MCF 10A (cell line): ENCODE measurements at regions of chr2 and their contacts with region 1.

Region 1: DNA sequence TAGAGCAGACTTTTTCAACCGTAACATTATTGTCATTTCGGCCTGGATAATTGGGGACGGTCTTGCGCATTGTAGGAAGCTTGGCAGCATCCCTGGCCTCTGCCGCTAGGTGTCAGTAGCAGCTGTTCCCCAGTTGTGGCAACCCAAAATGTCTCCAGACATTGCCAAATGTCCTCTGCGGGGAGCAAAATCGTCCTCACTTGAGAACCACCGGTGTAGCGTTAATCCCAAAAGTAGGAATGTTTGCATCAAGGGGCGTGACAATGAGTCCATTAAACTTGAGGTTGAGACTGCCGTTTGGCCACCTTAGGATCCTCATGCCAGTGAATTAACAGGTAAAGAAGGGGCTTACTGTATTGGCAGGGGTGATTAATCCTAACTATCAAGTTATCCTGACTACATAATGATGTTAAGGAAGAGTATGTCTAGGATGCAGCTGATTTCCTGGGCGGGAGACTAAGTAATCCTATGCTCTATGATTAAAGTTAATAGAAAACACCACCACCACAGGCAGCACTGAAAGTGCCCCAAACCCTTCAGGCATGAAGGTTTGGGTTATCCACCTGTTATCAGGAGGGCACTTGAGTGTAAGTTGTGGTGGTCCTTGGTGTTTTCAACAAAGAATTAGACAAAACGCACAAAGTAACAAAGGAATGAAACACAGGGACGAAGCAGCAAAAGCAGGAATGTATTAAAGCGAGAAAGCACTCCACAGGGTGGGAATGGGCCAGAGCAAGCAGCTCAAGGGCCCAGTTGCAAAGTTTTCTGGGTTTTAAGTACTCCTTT is 4.9 kb upstream of the ZC3H8 start:
- DNase-seq: peak; percentile 83
- H3K4me3 Mint-ChIP-seq: peak overlapping the region; percentile 39
- H3K27ac Mint-ChIP-seq: no peak overlapping the region
- H3K4me1 Mint-ChIP-seq: peaks cover 6% of the 10 kb centered on the region
- H3K27me3 Mint-ChIP-seq: no peaks in the 10 kb centered on the region
- CTCF ChIP-seq: peak; percentile 95

Region 2: DNA sequence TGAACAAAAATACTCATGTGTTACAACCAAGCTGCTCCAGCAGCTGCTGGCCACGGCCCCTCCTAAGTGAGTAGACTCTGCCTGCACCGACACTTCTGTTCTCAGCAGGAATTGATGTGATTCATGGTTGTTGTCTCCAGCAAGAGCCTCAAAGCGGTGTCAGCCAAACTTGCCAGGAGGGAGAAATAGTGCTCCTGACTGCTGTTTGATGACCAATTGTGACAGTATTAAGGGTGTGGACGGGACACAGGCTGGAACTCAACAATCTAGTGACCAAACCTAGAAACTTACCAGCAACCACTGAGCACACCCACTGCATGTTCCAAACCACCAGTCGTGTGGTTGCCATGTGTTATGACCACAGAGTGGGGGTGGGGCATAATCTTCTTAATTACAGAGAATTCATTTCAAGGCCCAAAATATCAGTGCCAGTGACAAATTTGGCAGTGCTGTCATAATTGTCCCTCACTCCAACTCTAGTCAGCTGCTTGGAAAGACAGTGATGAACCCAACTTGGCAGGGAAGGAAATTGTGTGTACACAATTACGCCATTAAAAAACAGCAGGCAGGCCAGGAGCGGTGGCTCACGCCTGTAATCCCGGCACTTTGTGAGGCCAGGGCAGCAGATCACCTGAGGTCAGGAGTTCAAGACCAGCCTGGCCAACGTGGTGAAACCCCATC is 91.1 kb before region 1 on chr2:
- CTCF ChIA-PET with region 1: no interaction called
- POLR2A ChIA-PET with region 1: no interaction called
- intact Hi-C with region 1: no loop called
- DNase-seq: peak; percentile 2
- H3K4me3 Mint-ChIP-seq: no peak overlapping the region
- H3K27ac Mint-ChIP-seq: no peak overlapping the region
- H3K4me1 Mint-ChIP-seq: no peaks in the 10 kb centered on the region
- H3K27me3 Mint-ChIP-seq: no peaks in the 10 kb centered on the region
- CTCF ChIP-seq: no peak

Region 3: GRCh38 chr2:112244854-112245253 is 14.8 kb before region 1 on chr2:
- CTCF ChIA-PET with region 1: interaction called, 15 read pairs
- POLR2A ChIA-PET with region 1: interaction called, 5 read pairs
- intact Hi-C with region 1: no loop called
- DNase-seq: no peak
- H3K4me3 Mint-ChIP-seq: no peak overlapping the region
- H3K27ac Mint-ChIP-seq: no peak overlapping the region
- H3K4me1 Mint-ChIP-seq: no peaks in the 10 kb centered on the region
- H3K27me3 Mint-ChIP-seq: no peaks in the 10 kb centered on the region
- CTCF ChIP-seq: no peak

Region 4: GRCh38 chr2:112275306-112275886 is 15.7 kb after region 1 on chr2 and contains the start of gene ZC3H6:
- CTCF ChIA-PET with region 1: interaction called, 7 read pairs
- POLR2A ChIA-PET with region 1: interaction called, 28 read pairs
- intact Hi-C with region 1: no loop called
- DNase-seq: peak; percentile 94
- H3K4me3 Mint-ChIP-seq: peak within 1 kb of the TSS; percentile 84
- H3K27ac Mint-ChIP-seq: peak within 1 kb of the TSS; percentile 96
- H3K4me1 Mint-ChIP-seq: no peaks in the 10 kb centered on the region
- H3K27me3 Mint-ChIP-seq: no peaks in the 10 kb centered on the region
- CTCF ChIP-seq: peak; percentile 6
- total RNA-seq, gene ZC3H6: 16.9 and 18.6 TPM in 2 replicates

Region 5: GRCh38 chr2:112301171-112301584 is 41.5 kb after region 1 on chr2:
- CTCF ChIA-PET with region 1: no interaction called
- POLR2A ChIA-PET with region 1: no interaction called
- intact Hi-C with region 1: no loop called
- DNase-seq: no peak
- H3K4me3 Mint-ChIP-seq: no peak overlapping the region
- H3K27ac Mint-ChIP-seq: no peak overlapping the region
- H3K4me1 Mint-ChIP-seq: no peaks in the 10 kb centered on the region
- H3K27me3 Mint-ChIP-seq: no peaks in the 10 kb centered on the region
- CTCF ChIP-seq: no peak

Region 6: GRCh38 chr2:112542123-112542983 is 282.7 kb after region 1 on chr2 and contains the start of gene POLR1B:
- CTCF ChIA-PET with region 1: no interaction called
- POLR2A ChIA-PET with region 1: interaction called, 4 read pairs
- intact Hi-C with region 1: loop called (anchors 2 kb)
- DNase-seq: peak; percentile 90
- H3K4me3 Mint-ChIP-seq: no peak within 1 kb of the TSS
- H3K27ac Mint-ChIP-seq: no peak within 1 kb of the TSS
- H3K4me1 Mint-ChIP-seq: peaks cover 11% of the 10 kb centered on the region
- H3K27me3 Mint-ChIP-seq: no peaks in the 10 kb centered on the region
- CTCF ChIP-seq: no peak
- total RNA-seq, gene POLR1B: 51.6 and 74.0 TPM in 2 replicates

Region 7: GRCh38 chr2:112685271-112685884 is 425.7 kb after region 1 on chr2:
- CTCF ChIA-PET with region 1: no interaction called
- POLR2A ChIA-PET with region 1: no interaction called
- intact Hi-C with region 1: no loop called
- DNase-seq: no peak
- H3K4me3 Mint-ChIP-seq: no peak overlapping the region
- H3K27ac Mint-ChIP-seq: no peak overlapping the region
- H3K4me1 Mint-ChIP-seq: no peaks in the 10 kb centered on the region
- H3K27me3 Mint-ChIP-seq: no peaks in the 10 kb centered on the region
- CTCF ChIP-seq: peak; percentile 6